Activated naive CD4-positive, alpha-beta T cell treated with anti-CD3 and anti-CD28 coated beads, Interleukin-2, amount 10 ng/mL, durations not matched to agents 7 days and 5 days (primary cell): ENCODE measurements at regions of chr7 and their contacts with region 1.

Region 1: GRCh38 chr7:32479574-32480200 is 10.5 kb downstream of the LSM5 start:
- DNase-seq: peak; percentile 38
- H3K4me3 Mint-ChIP-seq: no peak overlapping the region
- H3K27ac Mint-ChIP-seq: no peak overlapping the region
- H3K4me1 Mint-ChIP-seq: peaks cover 6% of the 10 kb centered on the region
- H3K27me3 Mint-ChIP-seq: peaks cover 20% of the 10 kb centered on the region

Region 2: GRCh38 chr7:32212321-32212720 is 267.4 kb before region 1 on chr7:
- CTCF ChIA-PET with region 1: interaction called, 32 read pairs
- DNase-seq: no peak
- H3K4me3 Mint-ChIP-seq: no peak overlapping the region
- H3K27ac Mint-ChIP-seq: no peak overlapping the region
- H3K4me1 Mint-ChIP-seq: no peaks in the 10 kb centered on the region
- H3K27me3 Mint-ChIP-seq: peaks cover 4% of the 10 kb centered on the region

Region 3: GRCh38 chr7:32347244-32347828 is 132.4 kb before region 1 on chr7:
- CTCF ChIA-PET with region 1: no interaction called
- DNase-seq: peak; percentile 52
- H3K4me3 Mint-ChIP-seq: no peak overlapping the region
- H3K27ac Mint-ChIP-seq: no peak overlapping the region
- H3K4me1 Mint-ChIP-seq: no peaks in the 10 kb centered on the region
- H3K27me3 Mint-ChIP-seq: no peaks in the 10 kb centered on the region

Region 4: DNA sequence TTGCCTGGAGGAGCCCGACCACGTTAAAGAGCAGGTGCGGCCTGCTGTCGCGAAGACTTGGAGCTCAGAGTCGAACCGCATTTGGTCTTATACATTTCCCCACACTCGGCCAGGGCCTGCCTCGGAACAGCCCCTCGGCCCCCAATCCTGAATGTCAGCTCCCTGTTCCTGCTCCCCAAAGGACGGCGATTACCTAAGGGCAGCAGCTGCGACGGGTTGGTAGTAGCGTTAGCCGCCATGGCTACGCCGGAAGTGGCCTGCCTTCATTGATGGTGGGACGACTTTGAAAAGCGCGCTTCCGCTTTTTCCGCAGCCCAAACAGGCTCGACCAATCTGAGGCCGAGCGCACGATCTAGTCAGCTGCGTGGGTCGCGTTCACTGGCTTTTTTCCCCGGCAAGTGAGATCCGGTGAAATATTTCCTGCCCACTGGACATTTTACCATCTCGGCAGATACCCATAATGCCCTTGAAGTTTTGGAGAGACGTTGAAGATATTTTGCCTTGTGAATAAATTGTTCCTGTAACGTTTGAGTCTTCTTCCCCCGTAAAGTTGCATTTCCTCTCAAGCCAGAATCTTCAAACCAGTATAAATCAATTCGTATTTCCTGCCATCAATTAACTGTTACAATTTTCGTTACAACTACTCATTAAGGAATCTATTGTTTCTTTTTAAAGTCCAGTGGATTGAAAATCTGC is 10.6 kb after region 1 on chr7 and contains the start of gene LSM5:
- CTCF ChIA-PET with region 1: interaction called, 12 read pairs
- DNase-seq: peak; percentile 94
- H3K4me3 Mint-ChIP-seq: peak within 1 kb of the TSS; percentile 80
- H3K27ac Mint-ChIP-seq: peak within 1 kb of the TSS; percentile 91
- H3K4me1 Mint-ChIP-seq: peaks cover 42% of the 10 kb centered on the region
- H3K27me3 Mint-ChIP-seq: no peaks in the 10 kb centered on the region

Region 5: GRCh38 chr7:32500922-32501341 is 21.2 kb after region 1 on chr7:
- CTCF ChIA-PET with region 1: no interaction called
- DNase-seq: no peak
- H3K4me3 Mint-ChIP-seq: no peak overlapping the region
- H3K27ac Mint-ChIP-seq: no peak overlapping the region
- H3K4me1 Mint-ChIP-seq: peaks cover 45% of the 10 kb centered on the region
- H3K27me3 Mint-ChIP-seq: no peaks in the 10 kb centered on the region

Region 6: DNA sequence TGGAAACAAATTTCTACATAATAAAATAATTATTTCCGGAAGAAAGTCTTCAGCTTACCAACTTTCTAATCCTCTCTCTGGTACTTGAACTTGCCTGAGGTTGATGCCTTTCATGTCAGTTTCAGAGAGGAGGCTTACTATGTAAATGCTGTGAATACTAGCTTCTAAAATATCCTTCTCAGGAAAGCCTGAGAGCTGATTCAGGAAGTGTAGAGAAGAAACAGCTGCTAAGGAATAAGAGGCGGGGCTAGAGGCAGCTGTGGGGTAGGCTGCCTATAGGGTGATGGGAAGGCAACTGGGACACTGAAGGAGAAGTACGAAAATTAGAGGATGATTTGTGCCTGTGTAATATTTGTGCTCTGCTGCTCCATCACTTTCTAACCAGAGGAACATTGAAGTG is 84.9 kb after region 1 on chr7:
- CTCF ChIA-PET with region 1: no interaction called
- DNase-seq: no peak
- H3K4me3 Mint-ChIP-seq: no peak overlapping the region
- H3K27ac Mint-ChIP-seq: no peak overlapping the region
- H3K4me1 Mint-ChIP-seq: peaks cover 3% of the 10 kb centered on the region
- H3K27me3 Mint-ChIP-seq: no peaks in the 10 kb centered on the region